SK-N-SH (cell line): ENCODE measurements at regions of chr13 and their contacts with region 1.

Region 1: GRCh38 chr13:91722267-91722884 is 324.0 kb downstream of the GPC5 start:
- DNase-seq: peak; percentile 36
- H3K4me3 ChIP-seq: no peak overlapping the region; a peak in 1 of 4 replicates
- H3K27ac ChIP-seq: no peak overlapping the region
- H3K4me1 ChIP-seq: peaks cover 0 to 3% of the 10 kb centered on the region in 2 experiments; a peak in 2 of 4 replicates
- H3K27me3 ChIP-seq: no peaks in the 10 kb centered on the region
- CTCF ChIP-seq: peak; percentile 80
- EP300 ChIP-seq: no peak
- RAD21 ChIP-seq: peak; percentile 79

Region 2: DNA sequence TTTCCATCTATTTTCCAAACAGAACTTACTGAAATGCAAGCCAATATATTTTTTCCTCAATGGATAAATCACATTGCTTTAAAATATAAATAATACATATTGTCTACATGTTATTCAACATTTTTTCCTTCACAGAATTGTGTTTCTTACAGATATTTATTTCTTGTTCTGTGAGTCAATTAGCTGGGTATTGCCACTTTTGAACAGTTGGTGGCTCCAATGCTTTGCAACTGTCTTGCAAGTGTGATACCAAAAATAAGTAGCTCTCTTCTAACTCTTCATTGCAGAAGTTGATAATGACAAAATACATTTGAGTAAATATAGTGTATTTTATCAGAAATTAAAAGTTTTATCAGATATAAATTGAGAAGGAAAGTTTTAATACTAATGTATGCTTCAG is 341.0 kb before region 1 on chr13:
- CTCF ChIA-PET with region 1: interaction called, 47 read pairs
- POLR2A ChIA-PET with region 1: no interaction called
- DNase-seq: peak; percentile 14
- H3K4me3 ChIP-seq: no peak overlapping the region; a peak in 1 of 4 replicates
- H3K27ac ChIP-seq: no peak overlapping the region
- H3K4me1 ChIP-seq: no peaks in the 10 kb centered on the region
- H3K27me3 ChIP-seq: no peaks in the 10 kb centered on the region
- CTCF ChIP-seq: peak; percentile 61
- EP300 ChIP-seq: no peak
- RAD21 ChIP-seq: peak; percentile 95

Region 3: DNA sequence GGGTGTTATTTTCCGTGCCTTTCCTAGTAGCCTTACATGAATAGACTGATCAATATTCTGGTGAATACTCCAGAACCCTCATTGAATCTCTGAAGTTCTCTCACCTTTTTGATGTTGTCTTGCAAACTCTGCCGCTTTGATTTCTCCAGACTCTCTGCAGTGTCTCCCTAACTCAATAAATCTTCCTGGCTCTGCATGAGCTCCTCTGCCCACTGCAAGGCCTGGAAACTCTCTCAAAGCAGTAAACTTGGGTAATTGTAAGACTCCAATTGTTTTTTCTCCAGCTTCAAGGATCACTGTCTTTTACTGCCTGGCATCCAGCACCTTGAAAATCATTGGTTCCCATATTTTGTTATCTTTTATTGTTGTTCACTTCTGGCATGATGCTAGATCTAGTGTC is 125.5 kb before region 1 on chr13:
- CTCF ChIA-PET with region 1: no interaction called
- POLR2A ChIA-PET with region 1: no interaction called
- DNase-seq: no peak
- H3K4me3 ChIP-seq: no peak overlapping the region
- H3K27ac ChIP-seq: no peak overlapping the region
- H3K4me1 ChIP-seq: no peaks in the 10 kb centered on the region
- H3K27me3 ChIP-seq: no peaks in the 10 kb centered on the region
- CTCF ChIP-seq: no peak
- EP300 ChIP-seq: no peak
- RAD21 ChIP-seq: no peak

Region 4: GRCh38 chr13:91739751-91740150 is 17.4 kb after region 1 on chr13:
- CTCF ChIA-PET with region 1: interaction called, 35 read pairs
- POLR2A ChIA-PET with region 1: no interaction called
- DNase-seq: no peak
- H3K4me3 ChIP-seq: no peak overlapping the region
- H3K27ac ChIP-seq: no peak overlapping the region
- H3K4me1 ChIP-seq: no peaks in the 10 kb centered on the region; a peak in 1 of 4 replicates
- H3K27me3 ChIP-seq: no peaks in the 10 kb centered on the region
- CTCF ChIP-seq: no peak
- EP300 ChIP-seq: no peak
- RAD21 ChIP-seq: no peak

Region 5: GRCh38 chr13:91785431-91786119 is 63.2 kb after region 1 on chr13:
- CTCF ChIA-PET with region 1: interaction called, 14 read pairs
- POLR2A ChIA-PET with region 1: no interaction called
- DNase-seq: no peak
- H3K4me3 ChIP-seq: no peak overlapping the region
- H3K27ac ChIP-seq: no peak overlapping the region
- H3K4me1 ChIP-seq: no peaks in the 10 kb centered on the region
- H3K27me3 ChIP-seq: no peaks in the 10 kb centered on the region
- CTCF ChIP-seq: no peak
- EP300 ChIP-seq: no peak
- RAD21 ChIP-seq: no peak